ENCODE measurements at regions of chr10 and their contacts with region 1.

Region 1: GRCh38 chr10:67849331-67850011 is 11.5 kb upstream of the DNAJC12 start:
- DNase-seq: peak; percentile 98 to 99
- ATAC-seq: peak; percentile 98
- H3K4me3 ChIP-seq: peak overlapping the region; percentile 89 to 97
- H3K27ac ChIP-seq: peak overlapping the region; percentile 79 to 80
- H3K4me1 ChIP-seq: no peaks in the 10 kb centered on the region
- H3K27me3 ChIP-seq: no peaks in the 10 kb centered on the region

Region 2: GRCh38 chr10:68074775-68075549 is 225.5 kb after region 1 on chr10 and contains the start of gene HERC4:
- intact Hi-C with region 1: loop called in 1 of 2 experiments (anchors 10 kb)
- DNase-seq: peak; percentile 97 to 99
- ATAC-seq: peak; percentile 99
- H3K4me3 ChIP-seq: peak within 1 kb of the TSS; percentile 91 to 94
- H3K27ac ChIP-seq: peak within 1 kb of the TSS; percentile 83 to 97
- H3K4me1 ChIP-seq: no peaks in the 10 kb centered on the region
- H3K27me3 ChIP-seq: no peaks in the 10 kb centered on the region
- total RNA-seq, gene HERC4: 81.9 to 108 TPM

Measured in aorta (tissue), 5 donors.